ENCODE measurements at regions of chr11 and their contacts with region 1.

Region 1: GRCh38 chr11:74909812-74910211 is 39.1 kb downstream of the XRRA1 start:
- DNase-seq: no peak
- H3K4me3 ChIP-seq: no peak overlapping the region
- CTCF ChIP-seq: no peak

Region 2: GRCh38 chr11:74870485-74870884 is 39.3 kb before region 1 on chr11:
- in situ Hi-C with region 1: loop called (anchors 5 kb)
- DNase-seq: peak; percentile 18
- H3K4me3 ChIP-seq: no peak overlapping the region
- CTCF ChIP-seq: peak; percentile 33

Region 3: DNA sequence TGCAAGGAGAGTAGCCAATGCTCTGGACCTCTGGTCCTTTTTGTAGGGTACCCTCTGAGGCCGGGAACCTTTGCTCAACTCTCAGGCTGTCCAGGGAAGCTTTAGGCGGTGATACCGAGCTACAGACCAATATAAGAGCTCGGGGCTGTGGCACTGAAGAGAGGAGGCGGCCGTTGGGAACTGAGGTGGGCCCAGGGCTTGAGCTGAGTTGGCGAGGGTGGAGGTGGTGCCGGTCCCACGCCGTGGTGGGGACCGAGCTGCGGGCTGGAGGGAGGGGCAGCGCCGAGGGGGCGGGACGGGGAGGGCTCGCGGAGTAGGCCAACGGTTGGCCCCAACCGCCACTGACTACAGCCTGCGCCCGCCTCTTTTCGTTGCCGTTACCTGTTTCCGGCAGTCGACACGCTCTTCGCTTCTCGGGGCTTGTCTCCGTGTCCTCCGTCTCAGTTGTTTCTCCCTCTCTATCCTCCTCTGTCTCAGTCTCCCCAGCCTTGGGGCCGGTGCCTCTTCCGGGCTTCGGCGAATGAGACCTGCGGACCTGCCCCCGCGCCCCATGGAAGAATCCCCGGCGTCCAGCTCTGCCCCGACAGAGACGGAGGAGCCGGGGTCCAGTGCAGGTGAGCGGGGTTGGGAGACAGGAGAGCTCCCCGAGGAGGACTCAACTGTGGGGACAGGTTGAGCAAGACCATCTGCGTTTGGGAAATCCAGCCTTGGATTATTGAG is 78.9 kb after region 1 on chr11 and contains the start of gene NEU3:
- in situ Hi-C with region 1: no loop called
- DNase-seq: peak; percentile 33
- H3K4me3 ChIP-seq: peak within 1 kb of the TSS; percentile 67
- CTCF ChIP-seq: no peak

Measured in astrocyte of the cerebellum (primary cell).